PC-3 (cell line): ENCODE measurements at regions of chr11 and their contacts with region 1.

Region 1: DNA sequence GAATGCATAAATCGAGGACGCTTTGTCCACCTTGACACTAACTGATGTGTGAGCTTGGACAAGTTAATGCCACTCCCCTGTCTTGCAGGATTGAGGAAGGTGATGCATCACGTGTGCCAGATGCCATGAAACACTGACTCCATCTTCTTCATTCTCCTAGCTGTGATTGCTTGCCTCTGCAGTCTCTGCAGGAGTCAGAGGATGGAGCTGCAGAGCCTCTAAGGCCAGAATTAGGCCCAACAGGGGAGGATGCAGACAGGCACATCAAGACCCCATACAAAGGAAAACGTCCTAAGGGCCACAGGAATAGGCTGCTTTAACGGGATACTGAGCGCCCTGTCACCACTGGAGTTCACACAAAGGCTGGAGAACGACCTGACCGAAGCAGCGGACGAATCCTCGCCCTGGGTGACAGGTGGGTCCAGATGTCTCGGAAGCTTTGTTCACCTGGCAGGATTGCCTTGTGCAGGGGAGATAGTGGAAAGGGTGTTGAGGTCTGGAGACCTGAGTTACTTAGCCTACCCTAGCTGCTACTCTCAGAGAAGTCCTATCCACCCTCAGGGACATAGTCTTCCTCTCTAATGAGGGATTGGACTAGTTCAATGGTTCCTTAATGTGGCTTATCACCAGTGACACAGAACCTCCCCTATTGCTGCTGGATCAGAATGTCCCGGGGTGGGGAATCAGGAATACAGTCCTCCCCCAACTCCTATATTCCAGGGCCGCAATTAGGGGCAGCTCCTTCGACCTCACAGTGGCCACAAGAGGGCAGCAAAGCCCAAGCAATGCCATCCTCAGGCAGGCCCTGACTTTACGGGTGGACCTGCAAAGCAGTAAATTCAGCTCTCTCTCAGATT is 32.4 kb downstream of the DBX1 start:
- DNase-seq: peak; percentile 78
- ATAC-seq: peak; percentile 64
- H3K4me3 ChIP-seq: no peak overlapping the region
- H3K27ac ChIP-seq: no peak overlapping the region
- H3K4me1 ChIP-seq: peaks cover 26% of the 10 kb centered on the region
- H3K27me3 ChIP-seq: no peaks in the 10 kb centered on the region
- CTCF ChIP-seq: peak; percentile 85

Region 2: DNA sequence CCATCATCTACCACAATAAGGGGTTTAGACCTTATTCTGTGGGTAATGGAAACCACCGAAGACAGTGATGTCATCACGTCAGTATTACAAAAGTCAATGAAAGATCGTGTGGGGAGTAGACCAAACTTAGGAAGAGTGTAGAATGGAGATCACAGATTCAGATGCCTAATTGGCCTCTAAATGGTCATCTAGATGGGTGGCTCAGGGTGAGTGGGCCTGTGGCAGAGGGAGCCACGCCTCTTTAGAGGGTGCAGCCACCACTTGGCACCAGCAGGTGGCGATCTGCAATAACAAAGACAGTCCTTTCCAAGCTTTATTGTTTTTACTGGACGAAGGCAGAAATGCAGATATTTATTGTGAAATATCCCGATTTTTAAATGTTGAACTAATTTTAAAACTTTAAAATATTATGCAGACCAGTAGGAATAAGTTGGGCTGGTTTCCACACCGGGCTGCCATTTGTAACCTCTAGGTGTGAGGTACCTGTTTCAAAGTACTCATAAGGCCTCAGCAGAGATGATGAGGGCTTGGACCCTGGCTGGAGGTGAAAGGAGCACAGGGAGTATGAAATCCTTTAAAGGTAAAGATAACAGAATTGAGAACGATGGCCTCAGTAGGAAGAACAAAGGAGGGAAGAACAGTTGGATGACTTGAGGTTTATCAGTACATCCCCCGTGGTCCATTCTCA is 189.6 kb before region 1 on chr11:
- CTCF ChIA-PET with region 1: no interaction called
- POLR2A ChIA-PET with region 1: no interaction called
- intact Hi-C with region 1: loop called (anchors 2 kb)
- DNase-seq: peak; percentile 73
- ATAC-seq: peak; percentile 53
- H3K4me3 ChIP-seq: no peak overlapping the region
- H3K27ac ChIP-seq: peak overlapping the region; percentile 24; the same call in 1 of the 2 replicates
- H3K4me1 ChIP-seq: peaks cover 20% of the 10 kb centered on the region
- H3K27me3 ChIP-seq: no peaks in the 10 kb centered on the region
- CTCF ChIP-seq: peak; percentile 92

Region 3: GRCh38 chr11:20110908-20111669 is 16.8 kb before region 1 on chr11:
- CTCF ChIA-PET with region 1: interaction called, 3 read pairs
- POLR2A ChIA-PET with region 1: interaction called, 3 read pairs
- intact Hi-C with region 1: loop called (anchors 1 kb)
- DNase-seq: peak; percentile 90
- ATAC-seq: peak; percentile 77
- H3K4me3 ChIP-seq: no peak overlapping the region
- H3K27ac ChIP-seq: peak overlapping the region; percentile 97
- H3K4me1 ChIP-seq: peaks cover 35% of the 10 kb centered on the region
- H3K27me3 ChIP-seq: no peaks in the 10 kb centered on the region
- CTCF ChIP-seq: peak; percentile 91

Region 4: DNA sequence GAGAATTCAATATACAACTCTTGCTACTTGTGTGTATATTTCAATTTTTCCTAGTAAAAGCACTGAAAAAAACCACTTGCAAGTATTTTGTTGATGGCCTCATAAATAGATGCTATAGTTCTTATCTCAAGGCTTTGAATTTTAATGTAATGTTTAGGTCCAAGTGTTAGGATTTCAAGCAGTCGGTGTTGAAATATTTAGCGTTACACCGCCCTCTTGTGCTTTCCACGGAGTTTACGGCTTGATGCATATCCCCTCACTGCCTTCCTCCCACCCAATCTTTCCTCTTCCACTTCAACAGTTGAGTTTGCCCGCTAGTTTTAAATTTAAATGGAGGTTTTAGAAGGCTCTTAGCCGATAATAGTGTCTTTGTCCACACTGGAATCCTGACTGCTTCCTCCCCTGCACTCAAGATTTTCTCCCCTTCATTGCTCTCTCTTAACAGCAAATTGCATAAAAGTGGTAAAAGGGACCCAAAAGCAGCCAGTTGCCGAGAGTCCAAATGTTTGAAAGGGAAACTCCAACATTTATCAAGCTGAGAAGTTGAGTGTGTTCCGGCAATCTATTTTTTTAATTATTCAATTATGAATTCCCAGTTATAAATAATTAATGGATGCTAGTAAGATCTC is 209.7 kb after region 1 on chr11:
- CTCF ChIA-PET with region 1: no interaction called
- POLR2A ChIA-PET with region 1: no interaction called
- intact Hi-C with region 1: loop called (anchors 1 kb)
- DNase-seq: peak; percentile 47
- ATAC-seq: peak; percentile 75
- H3K4me3 ChIP-seq: no peak overlapping the region
- H3K27ac ChIP-seq: no peak overlapping the region
- H3K4me1 ChIP-seq: no peaks in the 10 kb centered on the region
- H3K27me3 ChIP-seq: peaks cover 84% of the 10 kb centered on the region
- CTCF ChIP-seq: peak; percentile 68

Region 5: GRCh38 chr11:20355221-20356219 is 227.6 kb after region 1 on chr11:
- CTCF ChIA-PET with region 1: interaction called, 6 read pairs
- POLR2A ChIA-PET with region 1: no interaction called
- intact Hi-C with region 1: loop called (anchors 1 kb)
- DNase-seq: peak; percentile 68
- ATAC-seq: peak; percentile 90
- H3K4me3 ChIP-seq: no peak overlapping the region
- H3K27ac ChIP-seq: no peak overlapping the region
- H3K4me1 ChIP-seq: peaks cover 15% of the 10 kb centered on the region
- H3K27me3 ChIP-seq: peaks cover under 1% of the 10 kb centered on the region; the same call in 1 of the 2 replicates
- CTCF ChIP-seq: peak; percentile 69

Region 6: DNA sequence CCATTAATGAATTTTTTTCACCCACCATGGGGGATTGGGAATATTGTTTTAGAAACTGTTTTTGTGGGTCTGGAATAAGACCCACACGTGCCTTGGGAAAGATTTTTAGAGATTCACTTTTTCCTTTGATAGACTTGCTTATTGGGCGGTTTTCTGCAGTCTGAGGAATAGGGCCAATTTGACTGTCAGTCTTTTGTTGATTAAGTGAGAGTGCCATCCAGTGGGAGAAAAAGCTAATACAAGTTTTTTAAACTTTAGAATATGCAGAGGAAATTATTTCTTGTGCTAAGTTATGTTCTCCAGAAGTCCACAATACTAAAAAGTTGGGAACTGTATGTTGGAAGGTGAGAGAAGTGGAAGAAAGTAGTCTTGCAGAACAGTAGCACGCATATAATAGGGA is 315.7 kb after region 1 on chr11:
- CTCF ChIA-PET with region 1: no interaction called
- POLR2A ChIA-PET with region 1: no interaction called
- intact Hi-C with region 1: loop called (anchors 1 kb)
- DNase-seq: peak; percentile 41
- ATAC-seq: peak; percentile 57
- H3K4me3 ChIP-seq: no peak overlapping the region
- H3K27ac ChIP-seq: no peak overlapping the region
- H3K4me1 ChIP-seq: no peaks in the 10 kb centered on the region
- H3K27me3 ChIP-seq: no peaks in the 10 kb centered on the region
- CTCF ChIP-seq: peak; percentile 58